Motor neuron (in vitro differentiated cells): ENCODE measurements at regions of chr1 and their contacts with region 1.

Region 1: GRCh38 chr1:240888039-240888786 is 276.3 kb upstream of the GREM2 start:
- ATAC-seq: peak in 2 of 8 experiments; percentile 33 to 43
- H3K4me3 ChIP-seq: no peak overlapping the region
- H3K27ac ChIP-seq: no peak overlapping the region
- H3K4me1 ChIP-seq: no peaks in the 10 kb centered on the region

Region 2: GRCh38 chr1:241485554-241485992 is 597.4 kb after region 1 on chr1:
- in situ Hi-C with region 1: loop called in 2 of 9 experiments (anchors 25 kb)
- ATAC-seq: peak in 1 of 8 experiments; percentile 35
- H3K4me3 ChIP-seq: no peak overlapping the region
- H3K27ac ChIP-seq: no peak overlapping the region
- H3K4me1 ChIP-seq: no peaks in the 10 kb centered on the region

Region 3: DNA sequence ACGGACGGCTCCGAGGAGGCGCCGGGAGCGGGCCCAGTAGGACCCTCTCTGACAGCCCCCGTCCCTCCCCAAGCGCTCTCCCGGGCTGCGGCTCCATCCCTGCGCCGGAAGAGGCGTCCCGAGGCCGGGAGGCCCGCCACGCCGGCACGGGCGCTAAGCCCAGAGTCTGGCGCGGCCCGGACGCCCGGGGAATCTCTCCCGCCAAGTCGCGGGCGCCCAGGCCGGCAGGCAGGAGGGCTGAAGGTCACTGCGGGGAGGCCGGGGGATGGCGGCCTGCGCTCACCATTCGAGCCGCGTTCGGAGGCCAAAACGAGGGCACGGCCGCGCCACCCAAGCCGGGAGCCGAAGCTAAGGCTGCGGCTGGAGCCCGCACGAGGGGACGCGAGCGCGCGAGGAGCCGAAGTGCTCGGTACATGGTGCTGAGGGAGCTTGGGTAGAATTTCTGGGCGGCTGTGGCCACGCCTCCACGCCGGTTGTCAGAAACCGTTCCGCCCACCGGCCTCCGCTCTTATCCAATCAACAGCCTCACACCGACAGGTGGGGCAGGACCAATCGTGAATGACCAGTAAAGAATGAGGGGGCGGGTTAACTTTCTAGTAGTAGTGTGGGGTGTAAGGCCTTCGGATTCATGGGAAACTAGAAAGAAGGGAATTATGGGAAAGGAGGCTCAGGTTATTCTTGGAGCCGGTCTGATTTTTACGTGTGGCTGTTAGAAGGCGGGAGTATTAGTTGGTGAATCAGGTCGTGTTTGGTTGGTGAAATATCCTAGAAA is 631.3 kb after region 1 on chr1 and contains the start of gene FH:
- in situ Hi-C with region 1: loop called in 1 of 9 experiments (anchors 25 kb)
- ATAC-seq: peak; percentile 91 to 97 (median 96)
- H3K4me3 ChIP-seq: peak within 1 kb of the TSS; percentile 73 to 97 (median 76)
- H3K27ac ChIP-seq: peak within 1 kb of the TSS; percentile 64 to 72
- H3K4me1 ChIP-seq: peaks cover 4 to 24% of the 10 kb centered on the region in 2 donors
- total RNA-seq, gene FH: 51.5 to 129 (median 95.5) TPM